ENCODE measurements at regions of chr1 and their contacts with region 1.

Region 1: DNA sequence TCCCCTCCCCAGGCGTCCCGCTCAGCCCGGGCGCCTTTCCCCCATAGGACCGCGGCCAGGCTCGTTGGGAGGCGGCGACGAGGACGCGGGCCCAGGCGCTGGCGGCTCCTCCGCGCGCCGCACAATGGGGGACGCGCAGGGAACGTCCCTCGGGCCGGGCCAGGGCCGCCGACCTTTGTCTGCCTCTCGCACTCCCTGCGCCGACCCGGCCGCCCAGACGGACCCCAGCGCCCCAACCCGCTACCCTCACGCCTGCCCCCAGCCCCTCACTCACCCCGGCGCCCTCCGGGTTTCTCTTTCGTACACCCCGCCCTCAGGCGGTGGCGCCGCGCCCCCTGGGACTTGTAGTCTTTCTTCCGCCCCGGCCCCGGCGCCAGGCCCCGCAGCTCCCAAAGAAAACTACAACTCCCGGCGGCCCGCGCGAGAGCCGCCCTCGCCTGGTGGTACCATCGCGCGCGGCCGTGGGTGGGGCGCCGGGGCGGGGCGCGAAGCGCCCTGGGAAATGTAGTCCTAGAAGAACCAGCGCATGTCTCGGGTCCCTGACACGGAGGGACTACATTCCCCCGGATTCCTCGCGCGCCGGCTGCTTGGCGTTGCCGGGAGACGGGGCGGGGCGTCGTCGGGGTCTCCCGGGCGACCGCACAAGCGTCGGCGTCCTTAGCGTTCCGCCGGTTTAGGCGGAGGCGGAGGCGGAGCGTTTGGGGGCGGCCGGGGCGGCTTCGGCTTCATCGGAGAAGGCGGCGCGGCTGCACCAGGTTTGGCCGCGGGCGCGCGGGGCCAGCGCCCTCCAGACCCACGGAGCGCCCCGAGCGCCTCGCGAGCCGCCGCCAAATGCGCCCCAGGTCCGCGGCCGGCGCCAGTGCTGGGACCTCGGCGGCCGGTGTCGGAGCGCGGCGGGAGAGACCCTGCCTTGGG is at the start of gene C1orf159:
- DNase-seq: peak; percentile 99
- H3K4me3 Mint-ChIP-seq: peak within 1 kb of the TSS; percentile 87
- H3K27ac Mint-ChIP-seq: peak within 1 kb of the TSS; percentile 87
- H3K4me1 Mint-ChIP-seq: peaks cover 9% of the 10 kb centered on the region
- H3K27me3 Mint-ChIP-seq: peaks cover 9% of the 10 kb centered on the region
- total RNA-seq, gene C1orf159: 24.5 and 28.0 TPM in 2 replicates

Region 2: GRCh38 chr1:999725-1000356 is 116.2 kb before region 1 on chr1 and contains the start of gene HES4:
- intact Hi-C with region 1: no loop called
- DNase-seq: peak; percentile 90
- H3K4me3 Mint-ChIP-seq: peak within 1 kb of the TSS; percentile 66
- H3K27ac Mint-ChIP-seq: peak within 1 kb of the TSS; percentile 89
- H3K4me1 Mint-ChIP-seq: peaks cover 9% of the 10 kb centered on the region
- H3K27me3 Mint-ChIP-seq: peaks cover 35% of the 10 kb centered on the region
- total RNA-seq, gene HES4: 2.8 and 5.0 TPM in 2 replicates

Region 3: GRCh38 chr1:1033009-1033587 is 82.9 kb before region 1 on chr1:
- intact Hi-C with region 1: loop called (anchors 1 kb)
- DNase-seq: peak; percentile 97
- H3K4me3 Mint-ChIP-seq: peak overlapping the region; percentile 51
- H3K27ac Mint-ChIP-seq: no peak overlapping the region
- H3K4me1 Mint-ChIP-seq: peaks cover 5% of the 10 kb centered on the region
- H3K27me3 Mint-ChIP-seq: peaks cover 11% of the 10 kb centered on the region

Region 4: GRCh38 chr1:1212780-1213344 is 96.8 kb after region 1 on chr1:
- intact Hi-C with region 1: loop called (anchors 2 kb)
- DNase-seq: peak; percentile 87
- H3K4me3 Mint-ChIP-seq: peak overlapping the region; percentile 81
- H3K27ac Mint-ChIP-seq: peak overlapping the region; percentile 84
- H3K4me1 Mint-ChIP-seq: peaks cover 54% of the 10 kb centered on the region
- H3K27me3 Mint-ChIP-seq: no peaks in the 10 kb centered on the region

Region 5: DNA sequence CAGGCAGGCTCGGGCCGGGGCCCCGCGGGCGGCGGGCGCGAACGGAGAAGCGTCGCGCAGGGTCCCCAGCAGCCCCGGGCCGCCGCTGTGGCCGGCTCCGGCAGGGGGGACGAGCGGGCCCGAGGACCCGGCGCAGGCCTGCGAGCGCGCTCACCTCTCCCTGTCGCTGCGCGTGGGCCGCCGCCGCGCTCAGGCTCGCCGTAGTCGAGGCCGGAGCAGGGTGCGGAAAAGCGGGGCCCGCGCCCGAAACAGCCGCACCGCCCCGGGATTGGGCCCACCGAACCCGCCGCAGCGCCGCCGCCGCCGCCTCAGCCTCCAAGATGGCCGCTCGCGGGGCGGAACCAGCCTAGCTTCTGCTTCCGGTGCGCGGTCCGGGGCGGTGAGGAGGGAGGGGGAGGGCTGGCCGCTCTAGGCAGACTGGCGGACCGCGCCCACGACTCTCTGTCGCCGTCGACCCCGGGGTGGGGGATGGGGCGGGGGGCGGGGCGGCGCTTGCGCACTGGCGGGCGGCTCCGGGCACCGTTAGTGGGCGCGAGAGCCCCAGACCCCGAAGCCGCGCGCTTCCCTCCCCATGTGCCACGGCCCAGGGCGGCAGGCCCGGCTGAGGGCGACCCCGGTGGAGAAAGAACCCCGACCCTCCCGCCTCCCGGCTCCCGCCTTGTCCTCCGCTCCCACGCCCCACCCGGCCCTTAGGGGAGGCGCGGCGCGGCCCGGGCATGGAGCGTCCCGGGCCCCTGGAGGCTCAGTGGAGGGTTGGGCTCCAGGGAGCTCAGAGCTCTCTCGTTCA is 157.7 kb after region 1 on chr1 and contains the start of gene UBE2J2:
- intact Hi-C with region 1: loop called (anchors 1 kb)
- DNase-seq: peak; percentile 97
- H3K4me3 Mint-ChIP-seq: peak within 1 kb of the TSS; percentile 86
- H3K27ac Mint-ChIP-seq: peak within 1 kb of the TSS; percentile 76
- H3K4me1 Mint-ChIP-seq: peaks cover 28% of the 10 kb centered on the region
- H3K27me3 Mint-ChIP-seq: no peaks in the 10 kb centered on the region
- total RNA-seq, gene UBE2J2: 86.9 and 87.3 TPM in 2 replicates

Region 6: GRCh38 chr1:1307908-1308755 is 192.1 kb after region 1 on chr1 and contains the starts of genes ACAP3 and PUSL1:
- intact Hi-C with region 1: loop called (anchors 2 kb)
- DNase-seq: peak; percentile 96
- H3K4me3 Mint-ChIP-seq: peak within 1 kb of the TSS; percentile 88
- H3K27ac Mint-ChIP-seq: peak within 1 kb of the TSS; percentile 90
- H3K4me1 Mint-ChIP-seq: peaks cover 18% of the 10 kb centered on the region
- H3K27me3 Mint-ChIP-seq: no peaks in the 10 kb centered on the region
- total RNA-seq, gene ACAP3: 54.1 and 55.7 TPM in 2 replicates
- total RNA-seq, gene PUSL1: 33.4 and 35.2 TPM in 2 replicates